Activated naive CD4-positive, alpha-beta T cell treated with anti-CD3 and anti-CD28 coated beads for 36 hours (primary cell): ENCODE measurements at regions of chr6 and their contacts with region 1.

Region 1: DNA sequence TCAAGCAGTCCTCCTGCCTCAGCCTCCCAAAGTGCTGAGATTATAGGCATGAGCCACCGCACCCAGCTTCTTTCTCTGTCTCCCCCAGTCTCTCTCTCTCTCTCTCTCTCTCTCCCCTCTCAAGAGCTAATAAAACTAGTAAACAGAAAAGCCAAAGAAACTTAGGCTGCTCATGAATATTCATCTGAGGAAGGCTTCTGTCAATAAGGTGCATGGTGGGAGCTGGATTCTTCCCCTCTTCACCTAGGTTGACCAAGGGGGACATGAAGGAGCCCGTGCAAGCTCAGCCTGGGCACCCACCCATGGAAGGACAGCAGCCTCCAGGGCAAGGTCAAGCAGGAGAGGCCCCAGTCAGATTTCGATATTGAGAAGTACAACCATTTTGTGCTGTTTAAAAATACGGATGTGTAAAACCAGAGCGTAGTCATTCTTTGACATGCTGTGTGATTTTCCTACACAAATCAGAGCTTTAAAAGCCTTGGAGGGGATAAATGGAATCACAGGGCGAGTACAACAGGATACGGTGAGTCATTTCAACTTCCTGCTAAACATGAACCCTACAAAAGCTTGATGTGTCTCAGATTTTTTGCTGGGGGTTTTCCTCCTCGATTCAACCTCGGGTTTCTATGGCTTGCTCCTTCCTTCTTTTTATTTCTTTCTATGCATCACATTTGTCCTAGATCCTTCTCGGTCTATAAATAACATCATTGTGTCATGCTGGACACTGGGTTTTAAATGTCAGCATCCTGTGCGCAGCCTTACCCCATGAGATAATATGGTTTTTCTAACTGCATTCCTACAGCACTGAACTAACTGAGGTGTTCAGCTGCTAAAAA is 368.9 kb upstream of the JARID2 start:
- DNase-seq: peak; percentile 64
- H3K4me3 Mint-ChIP-seq: peak overlapping the region; percentile 7
- H3K27ac Mint-ChIP-seq: peak overlapping the region; percentile 84
- H3K4me1 Mint-ChIP-seq: peaks cover 68% of the 10 kb centered on the region
- H3K27me3 Mint-ChIP-seq: no peaks in the 10 kb centered on the region

Region 2: DNA sequence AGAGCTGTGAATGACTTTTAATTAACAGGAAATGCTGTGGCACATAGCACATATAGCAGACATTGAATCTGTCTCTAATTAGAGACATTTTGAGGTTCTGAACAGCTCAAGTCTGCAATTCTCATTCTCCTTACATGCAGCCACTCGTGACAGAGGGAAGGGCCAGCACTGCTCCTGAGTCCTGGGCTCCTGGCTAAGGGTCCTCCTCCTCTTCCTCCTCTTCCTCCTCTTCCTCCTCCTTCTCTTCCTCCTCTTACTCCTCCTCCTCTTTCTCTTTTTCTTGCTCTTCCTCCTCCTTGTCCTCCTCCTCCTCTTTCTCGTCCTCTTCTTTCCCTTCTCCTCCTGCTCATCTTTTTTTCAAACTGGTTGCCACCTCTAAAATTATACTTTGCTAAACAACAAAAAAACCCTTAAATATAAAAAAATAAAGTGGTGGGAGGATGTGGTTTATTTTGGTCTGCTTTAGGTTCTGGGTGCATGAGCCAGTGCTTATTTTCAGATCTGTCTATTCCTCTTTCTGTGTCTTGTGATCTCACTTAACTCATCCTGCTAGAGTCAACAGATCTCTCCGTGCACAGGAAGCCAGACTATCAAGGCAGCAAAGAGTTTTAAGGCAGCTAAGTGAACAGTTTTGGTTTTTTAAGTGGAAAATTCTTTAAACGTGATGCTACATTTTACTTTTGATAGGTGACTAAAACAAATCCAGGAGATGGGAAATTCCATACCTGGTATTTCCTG is 600.2 kb before region 1 on chr6:
- CTCF ChIA-PET with region 1: no interaction called
- intact Hi-C with region 1: loop called (anchors 1 kb)
- DNase-seq: peak; percentile 63
- H3K4me3 Mint-ChIP-seq: peak overlapping the region; percentile 40
- H3K27ac Mint-ChIP-seq: peak overlapping the region; percentile 85
- H3K4me1 Mint-ChIP-seq: peaks cover 37% of the 10 kb centered on the region
- H3K27me3 Mint-ChIP-seq: no peaks in the 10 kb centered on the region

Region 3: GRCh38 chr6:14660806-14661579 is 216.0 kb before region 1 on chr6:
- CTCF ChIA-PET with region 1: no interaction called
- intact Hi-C with region 1: loop called (anchors 5 kb)
- DNase-seq: peak; percentile 71
- H3K4me3 Mint-ChIP-seq: no peak overlapping the region
- H3K27ac Mint-ChIP-seq: no peak overlapping the region
- H3K4me1 Mint-ChIP-seq: peaks cover 44% of the 10 kb centered on the region
- H3K27me3 Mint-ChIP-seq: no peaks in the 10 kb centered on the region

Region 4: DNA sequence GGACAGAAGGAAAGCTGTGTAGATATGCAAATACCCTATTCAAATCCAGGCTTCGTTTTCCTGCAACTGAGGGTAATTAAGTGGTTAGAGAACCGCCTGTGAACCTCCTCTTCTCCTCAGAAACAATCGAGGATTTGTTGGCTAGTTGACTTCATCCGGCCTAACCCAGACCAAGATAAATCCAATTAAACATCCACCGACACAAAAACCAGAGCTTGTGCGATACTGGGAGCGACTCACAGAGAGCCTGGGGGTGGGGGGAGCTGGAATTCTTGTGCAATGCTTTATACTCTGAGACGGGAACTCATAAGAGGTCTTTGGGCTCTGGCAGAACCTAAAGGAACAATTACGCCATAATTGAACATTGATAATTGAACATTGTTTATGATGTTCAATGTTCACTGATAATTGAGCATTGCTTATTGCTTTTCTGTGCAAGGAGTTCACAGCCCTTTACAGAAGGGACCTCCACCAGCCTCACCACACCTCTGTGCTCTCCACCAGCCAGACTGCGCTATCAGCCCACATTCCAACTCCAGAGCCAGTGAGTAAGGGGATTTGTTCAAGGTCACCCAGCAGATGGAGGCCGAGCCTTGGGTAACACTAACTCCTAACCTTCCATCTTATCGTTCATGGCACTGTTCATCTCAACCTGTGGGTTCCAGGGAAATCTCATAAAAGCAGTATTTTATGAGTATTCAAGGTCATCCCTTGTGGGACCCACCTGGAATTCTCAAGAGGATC is 60.7 kb before region 1 on chr6:
- CTCF ChIA-PET with region 1: no interaction called
- intact Hi-C with region 1: loop called (anchors 1 kb)
- DNase-seq: no peak
- H3K4me3 Mint-ChIP-seq: no peak overlapping the region
- H3K27ac Mint-ChIP-seq: no peak overlapping the region
- H3K4me1 Mint-ChIP-seq: peaks cover 10% of the 10 kb centered on the region
- H3K27me3 Mint-ChIP-seq: no peaks in the 10 kb centered on the region

Region 5: DNA sequence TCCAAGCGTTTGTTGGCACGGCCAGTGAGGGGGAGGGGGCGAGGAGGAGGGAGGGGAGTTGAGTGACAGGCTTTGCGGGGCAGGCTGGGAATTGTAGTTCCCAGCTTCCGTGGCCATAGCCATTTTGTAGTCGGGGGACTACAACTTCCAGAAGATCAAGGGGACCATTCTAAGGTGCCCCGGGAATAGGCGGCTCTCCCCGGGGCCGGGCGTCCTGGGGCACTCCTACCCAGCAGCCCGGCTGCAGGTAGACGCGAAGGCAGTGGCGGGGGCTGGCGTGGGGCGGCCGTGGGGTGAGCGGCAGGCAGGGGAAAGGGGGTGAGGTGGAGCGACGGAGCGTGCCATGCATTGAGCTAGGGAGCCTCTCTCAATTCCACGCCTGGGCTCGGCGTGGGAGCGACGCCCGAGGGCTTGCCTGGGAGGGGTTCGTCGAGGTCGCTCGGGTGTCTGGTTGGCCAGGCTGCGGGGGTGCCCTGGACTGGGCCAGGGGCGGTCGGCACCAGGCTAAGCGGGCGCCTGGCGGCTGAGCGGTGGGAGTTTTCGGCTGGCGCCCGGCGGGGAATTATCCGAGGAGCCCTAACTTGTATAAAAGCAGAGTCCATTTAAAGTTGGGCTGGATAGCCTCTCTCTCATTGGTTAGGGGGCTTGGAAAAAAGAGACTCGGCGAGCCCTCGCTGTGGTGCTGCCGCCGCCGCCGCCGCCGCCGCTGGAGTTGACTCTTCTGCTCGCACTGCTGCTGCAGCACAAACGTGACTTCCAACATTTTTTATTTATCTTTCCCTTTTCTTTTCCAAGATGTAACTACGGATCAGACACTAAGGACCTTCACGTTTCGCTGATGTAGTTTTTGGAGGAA is 368.6 kb after region 1 on chr6 and contains the start of gene JARID2:
- CTCF ChIA-PET with region 1: no interaction called
- intact Hi-C with region 1: loop called (anchors 1 kb)
- DNase-seq: peak; percentile 98
- H3K4me3 Mint-ChIP-seq: peak within 1 kb of the TSS; percentile 100
- H3K27ac Mint-ChIP-seq: peak within 1 kb of the TSS; percentile 93
- H3K4me1 Mint-ChIP-seq: peaks cover 23% of the 10 kb centered on the region
- H3K27me3 Mint-ChIP-seq: no peaks in the 10 kb centered on the region
- total RNA-seq, gene JARID2: 26.6 to 27.7 TPM

Region 6: DNA sequence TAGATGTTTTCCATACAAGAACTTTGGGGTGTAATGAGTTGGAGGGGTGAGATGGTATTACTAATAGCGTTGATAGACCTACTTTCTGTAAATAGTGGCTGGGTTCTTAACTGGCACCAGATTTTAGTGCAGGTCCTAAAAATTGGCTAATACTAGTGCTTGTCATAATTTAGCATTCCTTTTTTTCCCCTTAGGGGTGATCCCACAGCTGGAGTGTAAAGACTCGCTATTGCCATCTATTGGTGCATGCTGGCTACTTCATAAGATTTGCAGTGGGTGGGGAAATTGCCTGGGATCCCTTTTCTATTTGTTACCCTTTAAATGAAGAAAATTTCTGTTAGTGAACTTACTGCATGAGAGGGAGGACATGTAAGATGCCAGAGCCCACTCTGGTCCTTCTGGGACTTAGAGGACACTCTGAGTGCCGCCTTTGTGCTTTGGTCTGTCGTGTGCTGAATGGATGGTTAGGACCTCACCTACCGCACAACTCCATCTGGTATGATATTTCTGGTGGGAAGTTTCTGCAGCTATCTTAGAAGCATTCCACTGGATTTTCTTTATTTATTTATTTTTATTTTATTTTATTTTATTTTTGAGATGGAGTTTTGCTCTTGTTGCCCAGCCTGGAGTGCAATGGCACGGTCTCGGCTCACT is 564.3 kb after region 1 on chr6:
- CTCF ChIA-PET with region 1: no interaction called
- intact Hi-C with region 1: loop called (anchors 5 kb)
- DNase-seq: peak; percentile 60
- H3K4me3 Mint-ChIP-seq: no peak overlapping the region
- H3K27ac Mint-ChIP-seq: no peak overlapping the region
- H3K4me1 Mint-ChIP-seq: peaks cover 57% of the 10 kb centered on the region
- H3K27me3 Mint-ChIP-seq: no peaks in the 10 kb centered on the region

Region 7: DNA sequence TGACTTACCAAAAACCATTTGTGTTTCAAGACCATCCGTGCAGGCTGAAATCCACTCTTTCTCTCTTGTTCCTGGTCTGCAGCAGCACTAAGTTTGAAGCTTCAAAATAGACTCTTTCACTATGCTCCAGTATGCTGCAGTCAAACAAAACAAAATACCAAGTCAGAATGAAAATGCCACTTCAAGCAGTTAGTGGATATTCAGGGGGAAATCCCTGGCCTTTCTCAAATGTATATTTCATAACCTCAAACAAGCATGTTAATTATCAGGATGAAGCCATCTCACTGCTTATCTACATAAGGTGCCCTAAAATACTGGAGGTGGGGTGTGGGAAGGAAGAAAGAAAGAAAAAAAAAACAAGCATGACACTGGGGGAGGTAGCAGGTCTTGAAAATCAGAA is 1780.8 kb after region 1 on chr6:
- CTCF ChIA-PET with region 1: no interaction called
- intact Hi-C with region 1: loop called (anchors 5 kb)
- DNase-seq: peak; percentile 9
- H3K4me3 Mint-ChIP-seq: peak overlapping the region; percentile 2
- H3K27ac Mint-ChIP-seq: peak overlapping the region; percentile 32
- H3K4me1 Mint-ChIP-seq: peaks cover 43% of the 10 kb centered on the region
- H3K27me3 Mint-ChIP-seq: no peaks in the 10 kb centered on the region